Activated CD4-positive, alpha-beta memory T cell treated with anti-CD3 and anti-CD28 coated beads, Interleukin-2, amount 10 ng/mL, durations not matched to agents 7 days and 5 days (primary cell): ENCODE measurements at regions of chr6 and their contacts with region 1.

Region 1: GRCh38 chr6:134640975-134641429 is 308.9 kb downstream of the ALDH8A1 start:
- DNase-seq: peak; percentile 80
- H3K4me3 Mint-ChIP-seq: no peak overlapping the region
- H3K27ac Mint-ChIP-seq: no peak overlapping the region
- H3K4me1 Mint-ChIP-seq: peaks cover 29% of the 10 kb centered on the region
- H3K27me3 Mint-ChIP-seq: no peaks in the 10 kb centered on the region

Region 2: GRCh38 chr6:134161036-134161435 is 480.0 kb before region 1 on chr6:
- CTCF ChIA-PET with region 1: interaction called, 17 read pairs
- POLR2A ChIA-PET with region 1: no interaction called
- DNase-seq: no peak
- H3K4me3 Mint-ChIP-seq: no peak overlapping the region
- H3K27ac Mint-ChIP-seq: no peak overlapping the region
- H3K4me1 Mint-ChIP-seq: no peaks in the 10 kb centered on the region
- H3K27me3 Mint-ChIP-seq: no peaks in the 10 kb centered on the region

Region 3: DNA sequence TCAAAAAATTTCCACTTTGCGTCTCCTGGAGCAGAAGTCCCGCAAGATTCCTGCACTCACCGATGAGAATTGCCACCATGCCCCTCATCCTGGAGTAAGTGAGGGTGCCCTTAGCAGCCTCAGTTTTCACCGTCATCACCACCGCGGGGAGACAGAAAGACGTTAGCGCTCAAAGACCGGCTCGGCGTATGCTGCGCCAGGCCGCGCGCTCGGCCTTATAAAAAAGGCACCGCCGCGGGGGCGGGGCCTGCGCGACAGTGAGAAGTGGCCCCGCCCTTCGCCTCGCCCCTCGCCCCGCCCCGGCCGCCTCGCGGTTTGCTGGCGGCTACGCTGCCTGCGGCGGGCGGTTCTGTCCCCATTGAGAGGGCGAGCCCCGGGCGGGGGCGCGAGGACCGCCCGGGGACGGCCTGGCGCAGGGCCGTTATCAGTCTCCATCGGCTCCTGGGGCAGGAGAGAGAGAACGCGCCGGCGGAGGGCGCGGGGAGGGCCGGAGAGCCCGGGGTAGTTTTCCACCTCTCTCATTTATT is 466.3 kb before region 1 on chr6:
- CTCF ChIA-PET with region 1: interaction called, 45 read pairs
- POLR2A ChIA-PET with region 1: interaction called, 17 read pairs
- DNase-seq: peak; percentile 93
- H3K4me3 Mint-ChIP-seq: peak overlapping the region; percentile 87
- H3K27ac Mint-ChIP-seq: peak overlapping the region; percentile 96
- H3K4me1 Mint-ChIP-seq: peaks cover 69% of the 10 kb centered on the region
- H3K27me3 Mint-ChIP-seq: no peaks in the 10 kb centered on the region

Region 4: DNA sequence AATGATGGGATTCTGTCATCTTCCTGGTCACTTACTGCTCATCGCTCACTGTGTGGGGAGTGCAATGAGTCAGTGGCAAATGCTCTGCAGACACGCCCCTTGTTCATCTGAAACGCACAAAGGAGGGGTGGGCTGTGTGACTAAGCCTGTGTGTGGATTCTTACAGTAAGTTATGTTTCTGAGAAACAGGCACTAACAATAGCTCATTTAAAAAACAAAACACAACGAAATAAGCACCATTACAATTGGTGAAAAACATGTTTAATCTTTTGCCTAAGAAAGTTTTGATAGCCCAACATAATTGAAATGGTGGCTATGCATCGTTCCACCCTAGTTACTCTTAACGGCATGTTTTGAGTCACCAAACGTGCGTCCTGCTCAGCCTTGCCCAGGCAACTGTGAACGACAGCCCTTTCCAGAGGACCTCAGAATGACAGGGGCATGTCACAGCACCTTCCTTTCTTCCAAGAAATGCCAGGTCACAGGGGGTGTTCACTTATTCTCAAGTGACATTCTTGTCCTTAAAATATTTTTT is 204.7 kb before region 1 on chr6:
- CTCF ChIA-PET with region 1: interaction called, 11 read pairs
- POLR2A ChIA-PET with region 1: interaction called, 4 read pairs
- DNase-seq: peak; percentile 82
- H3K4me3 Mint-ChIP-seq: peak overlapping the region; percentile 67
- H3K27ac Mint-ChIP-seq: peak overlapping the region; percentile 93
- H3K4me1 Mint-ChIP-seq: peaks cover 36% of the 10 kb centered on the region
- H3K27me3 Mint-ChIP-seq: no peaks in the 10 kb centered on the region

Region 5: GRCh38 chr6:134651519-134651918 is 10.5 kb after region 1 on chr6:
- CTCF ChIA-PET with region 1: interaction called, 13 read pairs
- POLR2A ChIA-PET with region 1: no interaction called
- DNase-seq: no peak
- H3K4me3 Mint-ChIP-seq: no peak overlapping the region
- H3K27ac Mint-ChIP-seq: no peak overlapping the region
- H3K4me1 Mint-ChIP-seq: no peaks in the 10 kb centered on the region
- H3K27me3 Mint-ChIP-seq: peaks cover 16% of the 10 kb centered on the region